PC-9 (cell line): ENCODE measurements at regions of chr7 and their contacts with region 1.

Region 1: DNA sequence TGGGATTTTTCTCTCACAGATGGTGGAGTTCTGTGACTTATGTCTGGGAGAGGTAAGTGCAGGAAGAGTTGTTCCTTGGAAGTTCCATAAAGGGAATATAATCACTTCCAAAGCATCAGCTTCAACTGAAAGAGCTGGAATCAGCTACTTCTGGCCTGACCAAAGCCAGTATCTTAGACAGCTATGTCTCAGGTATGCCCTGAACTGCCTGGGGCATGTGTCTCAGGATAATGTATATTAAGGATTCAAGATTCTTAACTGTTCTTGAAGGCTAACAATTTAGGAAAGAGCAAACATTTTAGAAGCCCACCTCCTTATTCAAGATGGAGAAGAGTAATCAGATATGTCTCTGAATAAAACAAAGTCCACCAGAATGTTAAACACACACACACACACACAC is 12.4 kb upstream of the NOBOX start:
- DNase-seq: no peak
- H3K4me3 ChIP-seq: no peak overlapping the region
- H3K27ac ChIP-seq: no peak overlapping the region
- H3K4me1 ChIP-seq: peaks cover 9% of the 10 kb centered on the region; the same call in 1 of the 2 replicates
- H3K27me3 ChIP-seq: no peaks in the 10 kb centered on the region
- CTCF ChIP-seq: no peak

Region 2: GRCh38 chr7:144428432-144428831 is 12.6 kb after region 1 on chr7:
- CTCF ChIA-PET with region 1: no interaction called
- POLR2A ChIA-PET with region 1: interaction called, 15 read pairs
- intact Hi-C with region 1: no loop called
- DNase-seq: no peak
- H3K4me3 ChIP-seq: no peak overlapping the region
- H3K27ac ChIP-seq: no peak overlapping the region
- H3K4me1 ChIP-seq: no peaks in the 10 kb centered on the region
- H3K27me3 ChIP-seq: peaks cover 6% of the 10 kb centered on the region; the same call in 1 of the 2 replicates
- CTCF ChIP-seq: no peak